A549 (cell line): ENCODE measurements at regions of chr14 and their contacts with region 1.

Region 1: GRCh38 chr14:34502494-34503225 is 36.8 kb downstream of the EAPP start:
- DNase-seq: no peak
- ATAC-seq: no peak
- H3K4me3 ChIP-seq: no peak overlapping the region
- H3K27ac ChIP-seq: peak overlapping the region; percentile 46 to 69; a peak in 4 of 6 replicates
- H3K4me1 ChIP-seq: peaks cover 28% of the 10 kb centered on the region
- CTCF ChIP-seq: no peak
- EP300 ChIP-seq: no peak
- POLR2A ChIP-seq: no peak
- RAD21 ChIP-seq: no peak

Region 2: GRCh38 chr14:34331728-34332623 is 170.7 kb before region 1 on chr14:
- CTCF ChIA-PET with region 1: interaction called, 104 read pairs
- POLR2A ChIA-PET with region 1: interaction called, 5 read pairs
- DNase-seq: peak; percentile 36 to 82
- ATAC-seq: peak; percentile 92 to 96
- H3K4me3 ChIP-seq: no peak overlapping the region
- H3K27ac ChIP-seq: peak overlapping the region; percentile 66 to 83
- H3K4me1 ChIP-seq: peaks cover 22% of the 10 kb centered on the region
- CTCF ChIP-seq: peak; percentile 81
- EP300 ChIP-seq: no peak
- POLR2A ChIP-seq: no peak
- RAD21 ChIP-seq: peak; percentile 85 to 87